T-cell (primary cell): ENCODE measurements at regions of chr7 and their contacts with region 1.

Region 1: DNA sequence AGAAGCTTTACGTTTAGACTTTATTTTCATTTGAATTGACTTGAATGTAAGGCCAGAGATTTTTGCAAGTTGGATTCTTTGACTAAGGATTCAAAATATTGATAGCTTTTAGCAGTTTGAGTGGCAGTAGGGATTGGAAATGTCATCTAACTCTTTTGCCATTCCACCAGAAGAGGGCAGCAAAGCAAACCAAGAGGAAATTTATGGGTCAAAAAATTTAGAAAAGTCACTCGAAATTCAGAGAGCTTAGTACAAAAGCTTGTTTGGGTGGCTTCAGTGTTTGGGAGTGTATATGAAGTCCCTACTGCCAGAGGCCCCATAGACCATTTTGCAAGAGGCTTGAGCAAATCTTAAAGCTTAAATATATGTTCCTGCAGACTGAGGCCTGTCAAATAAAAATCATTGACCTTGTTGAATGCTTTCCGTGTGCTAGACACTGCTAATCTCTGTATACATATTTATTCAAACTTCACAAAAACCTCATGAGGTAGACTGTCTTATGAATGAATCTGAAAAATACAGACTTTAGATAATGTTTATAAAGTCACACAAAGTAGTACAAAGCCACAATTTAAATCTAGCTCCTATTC is 44.6 kb upstream of the RSBN1L start:
- DNase-seq: peak in 18 of 35 experiments; percentile 1 to 68 (median 16)
- ATAC-seq: peak in 1 of 4 experiments; percentile 19
- H3K4me3 ChIP-seq: no peak overlapping the region
- H3K4me3 Mint-ChIP-seq: no peak overlapping the region
- H3K27ac ChIP-seq: no peak overlapping the region
- H3K27ac Mint-ChIP-seq: no peak overlapping the region
- H3K4me1 ChIP-seq: no peaks in the 10 kb centered on the region
- H3K4me1 Mint-ChIP-seq: no peaks in the 10 kb centered on the region
- H3K27me3 ChIP-seq: no peaks in the 10 kb centered on the region
- H3K27me3 Mint-ChIP-seq: no peaks in the 10 kb centered on the region

Region 2: GRCh38 chr7:77619314-77619713 is 32.4 kb before region 1 on chr7:
- CTCF ChIA-PET with region 1: interaction called, 9 to 12 read pairs
- POLR2A ChIA-PET with region 1: no interaction called
- DNase-seq: no peak
- ATAC-seq: no peak
- H3K4me3 ChIP-seq: no peak overlapping the region
- H3K4me3 Mint-ChIP-seq: no peak overlapping the region
- H3K27ac ChIP-seq: no peak overlapping the region
- H3K27ac Mint-ChIP-seq: no peak overlapping the region
- H3K4me1 ChIP-seq: no peaks in the 10 kb centered on the region
- H3K4me1 Mint-ChIP-seq: peaks cover 0 to 9% (median 0%) of the 10 kb centered on the region in 3 donors
- H3K27me3 ChIP-seq: no peaks in the 10 kb centered on the region
- H3K27me3 Mint-ChIP-seq: no peaks in the 10 kb centered on the region

Region 3: GRCh38 chr7:77696198-77697028 is 44.7 kb after region 1 on chr7 and contains the start of gene RSBN1L:
- CTCF ChIA-PET with region 1: interaction called, 5 to 12 read pairs
- POLR2A ChIA-PET with region 1: no interaction called
- DNase-seq: peak; percentile 95 to 99 (median 98)
- ATAC-seq: peak; percentile 94 to 95 (median 95)
- H3K4me3 ChIP-seq: peak within 1 kb of the TSS; percentile 98 to 99
- H3K4me3 Mint-ChIP-seq: peak within 1 kb of the TSS; percentile 91 to 99 (median 96)
- H3K27ac ChIP-seq: peak within 1 kb of the TSS; percentile 92
- H3K27ac Mint-ChIP-seq: peak within 1 kb of the TSS; percentile 95
- H3K4me1 ChIP-seq: peaks cover 21 to 22% of the 10 kb centered on the region in 2 experiments
- H3K4me1 Mint-ChIP-seq: peaks cover 51 to 67% (median 61%) of the 10 kb centered on the region in 3 donors
- H3K27me3 ChIP-seq: no peaks in the 10 kb centered on the region
- H3K27me3 Mint-ChIP-seq: no peaks in the 10 kb centered on the region
- total RNA-seq, gene RSBN1L: 27.1 to 35.9 (median 32.4) TPM

Region 4: DNA sequence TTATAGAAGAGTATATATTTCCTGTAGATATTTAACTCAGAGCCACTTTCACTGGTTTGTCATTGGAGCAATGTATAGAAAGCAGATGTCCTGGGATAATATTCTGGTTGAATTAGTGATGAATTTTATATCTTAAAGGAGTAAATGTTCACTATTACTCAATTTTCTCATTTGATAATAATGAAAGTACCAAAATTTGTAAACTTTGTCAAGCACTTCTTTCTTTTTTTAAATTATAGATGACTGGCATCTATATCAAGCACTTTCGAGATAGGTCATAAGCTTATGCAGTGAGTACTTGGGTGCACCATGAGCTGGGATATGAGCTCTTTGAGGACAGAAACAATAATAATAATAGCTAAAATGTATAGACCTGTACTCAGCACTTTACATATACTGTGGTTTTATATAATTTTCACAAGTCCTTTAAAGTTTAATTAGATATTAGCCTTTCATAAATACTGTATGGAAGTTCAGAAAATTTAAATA is 55.9 kb after region 1 on chr7:
- CTCF ChIA-PET with region 1: interaction called, 8 to 14 read pairs
- POLR2A ChIA-PET with region 1: no interaction called
- DNase-seq: no peak
- ATAC-seq: no peak
- H3K4me3 ChIP-seq: no peak overlapping the region
- H3K4me3 Mint-ChIP-seq: peak overlapping the region in 1 of 3 donors; percentile 2
- H3K27ac ChIP-seq: no peak overlapping the region
- H3K27ac Mint-ChIP-seq: no peak overlapping the region
- H3K4me1 ChIP-seq: peaks cover 9 to 28% of the 10 kb centered on the region in 2 experiments
- H3K4me1 Mint-ChIP-seq: peaks cover 65 to 74% (median 68%) of the 10 kb centered on the region in 3 donors
- H3K27me3 ChIP-seq: no peaks in the 10 kb centered on the region
- H3K27me3 Mint-ChIP-seq: no peaks in the 10 kb centered on the region

Region 5: GRCh38 chr7:77759294-77759889 is 107.7 kb after region 1 on chr7:
- CTCF ChIA-PET with region 1: interaction called, 21 to 54 read pairs
- POLR2A ChIA-PET with region 1: interaction called in 1 of 2 experiments, 5 read pairs
- DNase-seq: peak in 34 of 35 experiments; percentile 16 to 91 (median 57)
- ATAC-seq: peak; percentile 59 to 79 (median 67)
- H3K4me3 ChIP-seq: no peak overlapping the region
- H3K4me3 Mint-ChIP-seq: no peak overlapping the region
- H3K27ac ChIP-seq: no peak overlapping the region
- H3K27ac Mint-ChIP-seq: no peak overlapping the region
- H3K4me1 ChIP-seq: peaks cover 0 to 2% of the 10 kb centered on the region in 2 experiments
- H3K4me1 Mint-ChIP-seq: peaks cover 39 to 53% (median 45%) of the 10 kb centered on the region in 3 donors
- H3K27me3 ChIP-seq: no peaks in the 10 kb centered on the region
- H3K27me3 Mint-ChIP-seq: no peaks in the 10 kb centered on the region

Region 6: GRCh38 chr7:77765906-77766800 is 114.5 kb after region 1 on chr7:
- CTCF ChIA-PET with region 1: interaction called, 21 to 54 read pairs
- POLR2A ChIA-PET with region 1: no interaction called
- DNase-seq: no peak
- ATAC-seq: no peak
- H3K4me3 ChIP-seq: no peak overlapping the region
- H3K4me3 Mint-ChIP-seq: no peak overlapping the region
- H3K27ac ChIP-seq: no peak overlapping the region
- H3K27ac Mint-ChIP-seq: no peak overlapping the region
- H3K4me1 ChIP-seq: peaks cover 0 to 2% of the 10 kb centered on the region in 2 experiments
- H3K4me1 Mint-ChIP-seq: peaks cover 30 to 36% (median 35%) of the 10 kb centered on the region in 3 donors
- H3K27me3 ChIP-seq: no peaks in the 10 kb centered on the region
- H3K27me3 Mint-ChIP-seq: no peaks in the 10 kb centered on the region

Region 7: GRCh38 chr7:78350926-78351325 is 699.3 kb after region 1 on chr7:
- CTCF ChIA-PET with region 1: no interaction called
- POLR2A ChIA-PET with region 1: no interaction called
- DNase-seq: no peak
- ATAC-seq: no peak
- H3K4me3 ChIP-seq: no peak overlapping the region
- H3K4me3 Mint-ChIP-seq: no peak overlapping the region
- H3K27ac ChIP-seq: no peak overlapping the region
- H3K27ac Mint-ChIP-seq: no peak overlapping the region
- H3K4me1 ChIP-seq: no peaks in the 10 kb centered on the region
- H3K4me1 Mint-ChIP-seq: no peaks in the 10 kb centered on the region
- H3K27me3 ChIP-seq: no peaks in the 10 kb centered on the region
- H3K27me3 Mint-ChIP-seq: peaks cover 0 to 4% of the 10 kb centered on the region in 2 donors